IMR-90 (cell line): ENCODE measurements at regions of chr1 and their contacts with region 1.

Region 1: DNA sequence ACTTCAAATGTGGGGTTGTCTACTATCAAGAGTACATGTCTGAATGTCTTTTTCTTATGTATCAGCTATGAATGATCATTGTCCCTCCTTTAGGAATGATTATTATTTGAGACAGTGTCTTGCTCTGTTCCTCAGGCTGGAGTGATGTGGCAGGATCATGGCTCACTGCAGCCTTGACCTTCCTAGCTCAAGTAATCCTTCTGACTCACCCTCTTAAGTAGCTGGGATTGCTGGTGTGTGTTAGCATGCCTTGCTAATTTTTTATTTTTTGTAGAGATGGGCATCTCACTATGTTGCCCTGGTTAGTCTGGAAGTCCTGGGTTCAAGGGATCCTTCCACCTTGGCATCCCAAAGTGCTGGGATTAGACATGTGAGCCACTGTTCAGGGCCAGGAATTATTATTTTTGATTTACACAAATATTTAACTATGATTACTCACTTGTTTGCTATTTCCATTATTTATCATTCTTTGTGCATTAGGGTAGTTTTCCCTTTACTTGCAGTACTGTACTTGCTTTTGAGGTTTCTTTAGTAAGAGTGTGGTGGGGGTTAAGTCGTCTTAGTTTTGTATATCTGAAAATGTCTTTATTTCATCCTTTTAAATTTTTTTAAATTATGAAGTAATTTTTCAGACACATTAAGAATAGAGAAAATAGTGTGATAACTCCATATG is 12.8 kb downstream of the S100A7 start:
- DNase-seq: peak; percentile 83
- ATAC-seq: peak; percentile 93
- H3K4me3 ChIP-seq: no peak overlapping the region
- H3K27ac ChIP-seq: no peak overlapping the region
- H3K4me1 ChIP-seq: no peaks in the 10 kb centered on the region
- H3K27me3 ChIP-seq: peaks cover 2% of the 10 kb centered on the region
- CTCF ChIP-seq: no peak
- POLR2A ChIP-seq: no peak
- RAD21 ChIP-seq: no peak

Region 2: GRCh38 chr1:153422450-153423068 is 25.1 kb before region 1 on chr1:
- CTCF ChIA-PET with region 1: no interaction called
- POLR2A ChIA-PET with region 1: no interaction called
- dilution Hi-C with region 1: no loop called
- in situ Hi-C with region 1: no loop called
- intact Hi-C with region 1: loop called (anchors 1 kb)
- DNase-seq: peak; percentile 64
- ATAC-seq: peak; percentile 82
- H3K4me3 ChIP-seq: no peak overlapping the region
- H3K27ac ChIP-seq: no peak overlapping the region
- H3K4me1 ChIP-seq: no peaks in the 10 kb centered on the region
- H3K27me3 ChIP-seq: no peaks in the 10 kb centered on the region
- CTCF ChIP-seq: no peak
- POLR2A ChIP-seq: no peak
- RAD21 ChIP-seq: no peak